PC-9 (cell line): ENCODE measurements at regions of chr1 and their contacts with region 1.

Region 1: DNA sequence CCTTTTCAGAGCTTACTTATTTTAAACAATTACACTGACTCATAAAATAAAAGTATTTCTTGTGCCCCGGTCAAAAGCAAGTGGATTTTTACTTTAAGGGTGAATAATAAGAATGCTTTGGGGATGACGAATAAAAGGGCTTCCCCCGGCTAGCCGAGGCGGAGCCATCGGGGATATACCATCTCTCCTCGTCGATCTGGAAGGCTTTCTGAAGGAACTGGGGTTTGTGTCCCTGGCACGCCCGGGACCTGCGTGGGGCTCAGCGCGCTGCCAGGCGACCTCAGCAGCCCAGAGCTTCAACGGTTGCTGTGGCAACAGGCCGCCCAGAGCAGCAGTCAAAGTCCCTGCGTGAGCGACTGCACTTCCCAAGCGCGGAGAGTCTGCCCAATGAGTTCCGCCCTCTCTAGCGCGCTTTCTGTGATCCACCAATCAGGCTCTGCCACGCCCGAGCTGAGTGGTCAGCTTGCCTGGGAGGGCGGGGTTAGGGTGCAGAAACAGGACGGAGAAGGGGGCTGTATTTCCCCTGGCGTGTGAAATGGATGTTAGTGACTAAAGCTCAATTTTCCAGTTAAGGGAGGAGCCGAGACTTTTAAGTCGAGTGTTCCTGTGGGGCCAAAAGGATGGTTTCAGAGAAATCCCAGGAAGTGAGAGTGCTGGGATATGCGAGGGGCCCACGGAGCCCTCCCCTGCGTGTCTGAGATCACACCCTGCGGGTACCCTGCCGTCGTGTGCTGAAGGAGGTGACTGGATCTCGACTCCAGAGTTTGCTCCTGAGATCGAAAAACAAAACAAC is 33.0 kb upstream of the MGST3 start:
- DNase-seq: peak; percentile 89
- H3K4me3 ChIP-seq: peak overlapping the region; percentile 60
- H3K27ac ChIP-seq: peak overlapping the region; percentile 56
- H3K4me1 ChIP-seq: peaks cover 9% of the 10 kb centered on the region
- H3K27me3 ChIP-seq: no peaks in the 10 kb centered on the region
- CTCF ChIP-seq: no peak

Region 2: GRCh38 chr1:165114022-165114888 is 483.8 kb before region 1 on chr1:
- CTCF ChIA-PET with region 1: no interaction called
- POLR2A ChIA-PET with region 1: no interaction called
- intact Hi-C with region 1: loop called (anchors 1 kb)
- DNase-seq: peak in 1 of 2 experiments; percentile 36
- H3K4me3 ChIP-seq: no peak overlapping the region
- H3K27ac ChIP-seq: no peak overlapping the region
- H3K4me1 ChIP-seq: no peaks in the 10 kb centered on the region
- H3K27me3 ChIP-seq: no peaks in the 10 kb centered on the region
- CTCF ChIP-seq: peak; percentile 93

Region 3: GRCh38 chr1:165144757-165145397 is 453.2 kb before region 1 on chr1:
- CTCF ChIA-PET with region 1: no interaction called
- POLR2A ChIA-PET with region 1: no interaction called
- intact Hi-C with region 1: loop called (anchors 5 kb)
- DNase-seq: peak in 1 of 2 experiments; percentile 56
- H3K4me3 ChIP-seq: no peak overlapping the region
- H3K27ac ChIP-seq: no peak overlapping the region
- H3K4me1 ChIP-seq: no peaks in the 10 kb centered on the region
- H3K27me3 ChIP-seq: no peaks in the 10 kb centered on the region
- CTCF ChIP-seq: peak; percentile 85

Region 4: DNA sequence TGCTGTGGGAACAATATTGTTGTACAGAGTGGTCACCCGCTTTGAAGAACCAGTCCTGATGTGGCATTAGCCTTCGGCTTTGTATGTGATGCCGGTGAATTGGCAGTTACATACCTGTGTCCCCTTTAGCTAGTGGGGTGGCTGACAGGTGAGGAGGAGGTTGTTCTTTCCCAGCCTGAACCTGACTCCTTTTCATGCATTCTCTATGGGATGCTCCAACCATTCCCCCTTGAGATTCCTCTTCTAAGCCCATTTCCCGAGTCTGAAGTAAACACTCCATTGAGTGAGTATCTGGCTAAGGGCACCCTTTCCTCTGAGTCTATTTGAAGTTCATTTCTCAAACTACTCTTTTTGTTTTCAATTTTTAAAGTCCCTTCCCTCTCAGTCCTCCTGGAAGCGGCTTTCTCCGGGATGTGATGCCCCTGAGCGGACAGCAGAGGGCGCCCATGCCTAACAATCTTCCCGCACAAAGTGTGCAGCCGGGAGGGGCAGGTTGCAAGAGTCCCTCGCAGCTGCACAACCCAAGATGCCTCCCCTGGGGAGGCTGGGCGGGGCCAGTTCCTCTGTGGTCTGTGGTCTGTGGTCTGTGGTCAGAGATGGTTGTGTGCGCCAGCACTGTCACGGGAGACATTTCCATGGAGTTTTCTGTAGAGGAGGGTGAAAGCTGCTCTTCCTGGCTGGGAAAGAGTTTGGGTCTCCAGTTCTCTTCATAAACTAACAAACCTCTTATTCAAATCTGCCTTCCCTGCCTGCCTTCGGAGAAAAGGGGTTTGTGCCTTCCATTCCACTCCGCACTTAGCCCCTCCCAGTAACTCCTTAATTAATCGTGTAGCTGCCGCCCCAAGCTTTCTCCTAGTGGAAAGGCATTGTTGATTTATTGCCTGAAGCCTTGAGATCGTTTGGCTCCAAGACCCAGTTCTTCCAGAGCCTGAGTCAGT is 205.2 kb before region 1 on chr1:
- CTCF ChIA-PET with region 1: interaction called, 4 read pairs
- POLR2A ChIA-PET with region 1: no interaction called
- intact Hi-C with region 1: loop called (anchors 1 kb)
- DNase-seq: peak; percentile 58 to 64
- H3K4me3 ChIP-seq: no peak overlapping the region
- H3K27ac ChIP-seq: no peak overlapping the region
- H3K4me1 ChIP-seq: no peaks in the 10 kb centered on the region
- H3K27me3 ChIP-seq: peaks cover 19% of the 10 kb centered on the region; the same call in 1 of the 2 replicates
- CTCF ChIP-seq: peak; percentile 97

Region 5: DNA sequence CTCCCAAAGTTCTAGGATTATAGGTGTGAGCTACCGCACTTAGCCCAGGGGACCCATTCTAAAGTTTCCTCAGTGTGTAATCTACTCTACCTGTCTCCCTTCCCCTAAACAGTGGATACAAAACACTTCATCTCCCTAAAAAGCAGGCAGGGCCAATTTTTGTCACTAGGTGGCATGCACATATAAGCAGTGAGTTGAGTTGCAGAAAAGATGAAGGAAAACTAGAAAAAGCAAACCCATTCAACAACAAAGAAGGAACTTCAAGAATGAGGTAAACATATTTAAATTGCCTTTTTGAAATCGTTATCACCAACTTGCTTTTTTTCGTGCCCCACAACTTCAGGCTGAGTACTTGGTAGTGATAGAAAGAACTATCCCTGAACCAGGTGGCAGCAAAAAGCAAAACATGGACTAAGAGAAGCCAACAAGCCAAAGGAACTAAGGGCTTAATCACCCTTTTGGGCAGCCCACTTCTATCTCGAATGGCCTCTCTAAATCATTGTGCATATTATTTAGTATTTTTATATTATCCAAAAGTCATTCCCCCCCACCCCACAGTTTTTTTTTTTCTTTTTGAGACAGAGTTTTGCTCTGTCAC is 119.9 kb after region 1 on chr1:
- CTCF ChIA-PET with region 1: interaction called, 3 read pairs
- POLR2A ChIA-PET with region 1: no interaction called
- intact Hi-C with region 1: loop called (anchors 2 kb)
- DNase-seq: peak; percentile 38 to 41
- H3K4me3 ChIP-seq: no peak overlapping the region
- H3K27ac ChIP-seq: no peak overlapping the region
- H3K4me1 ChIP-seq: no peaks in the 10 kb centered on the region
- H3K27me3 ChIP-seq: no peaks in the 10 kb centered on the region
- CTCF ChIP-seq: peak; percentile 81

Region 6: GRCh38 chr1:167059045-167059808 is 1461.1 kb after region 1 on chr1:
- CTCF ChIA-PET with region 1: no interaction called
- POLR2A ChIA-PET with region 1: no interaction called
- intact Hi-C with region 1: loop called (anchors 5 kb)
- DNase-seq: peak; percentile 58 to 63
- H3K4me3 ChIP-seq: no peak overlapping the region
- H3K27ac ChIP-seq: no peak overlapping the region
- H3K4me1 ChIP-seq: no peaks in the 10 kb centered on the region; the same call in 1 of the 2 replicates
- H3K27me3 ChIP-seq: no peaks in the 10 kb centered on the region
- CTCF ChIP-seq: peak; percentile 97